Activated CD4-positive, alpha-beta memory T cell treated with anti-CD3 and anti-CD28 coated beads for 36 hours (primary cell): ENCODE measurements at regions of chr13 and their contacts with region 1.

Region 1: GRCh38 chr13:51814825-51815650 is 11.1 kb upstream of the DHRS12 start:
- DNase-seq: peak; percentile 88
- H3K4me3 Mint-ChIP-seq: peak overlapping the region; percentile 48
- H3K27ac Mint-ChIP-seq: peak overlapping the region; percentile 66
- H3K4me1 Mint-ChIP-seq: peaks cover 67% of the 10 kb centered on the region
- H3K27me3 Mint-ChIP-seq: no peaks in the 10 kb centered on the region

Region 2: GRCh38 chr13:51674279-51674678 is 140.8 kb before region 1 on chr13:
- CTCF ChIA-PET with region 1: no interaction called
- POLR2A ChIA-PET with region 1: no interaction called
- intact Hi-C with region 1: no loop called
- DNase-seq: no peak
- H3K4me3 Mint-ChIP-seq: no peak overlapping the region
- H3K27ac Mint-ChIP-seq: no peak overlapping the region
- H3K4me1 Mint-ChIP-seq: peaks cover 4% of the 10 kb centered on the region
- H3K27me3 Mint-ChIP-seq: no peaks in the 10 kb centered on the region

Region 3: DNA sequence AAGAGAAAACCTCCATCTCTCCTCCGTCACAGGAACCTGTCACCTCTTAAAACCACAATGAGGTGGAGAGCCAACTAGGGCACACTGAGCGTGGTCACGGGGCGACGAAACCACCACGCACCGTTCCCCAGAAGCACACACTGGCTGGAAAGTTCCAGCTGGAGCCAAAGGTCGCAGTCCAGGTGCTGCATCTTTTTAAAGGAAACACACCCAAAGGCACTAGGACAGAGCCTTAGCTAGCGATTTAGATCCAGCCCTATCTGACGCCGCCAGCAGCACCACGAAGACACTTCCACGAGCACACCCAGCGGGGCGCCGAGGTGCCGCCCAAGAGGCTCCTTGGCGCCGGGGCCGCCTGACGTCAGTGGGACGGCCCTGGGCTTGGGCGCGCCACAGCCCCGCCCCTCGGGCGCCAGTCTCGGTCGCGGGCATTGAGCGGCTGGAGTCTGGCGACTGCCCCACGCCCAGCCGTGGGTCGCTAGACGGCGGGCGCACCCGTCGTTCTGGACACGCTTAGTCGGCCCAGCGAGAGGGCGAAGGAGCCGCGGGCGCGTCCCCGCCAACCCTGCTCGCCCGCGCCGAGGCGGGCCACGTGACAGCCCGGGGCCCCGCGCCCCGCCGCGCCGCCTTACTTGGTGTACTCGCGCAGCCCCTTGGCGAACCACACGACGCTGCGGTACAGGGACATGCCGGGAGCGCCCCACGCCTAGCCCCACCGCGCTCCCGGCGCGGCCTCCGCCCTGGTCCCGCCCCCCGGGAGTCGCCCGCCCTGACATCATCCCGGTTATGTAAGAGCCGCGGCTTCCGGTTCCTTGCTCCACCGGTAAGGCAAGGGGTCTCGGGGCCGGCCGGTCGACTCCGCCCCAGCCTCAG is 11.4 kb before region 1 on chr13 and contains the start of gene DHRS12:
- CTCF ChIA-PET with region 1: interaction called, 38 read pairs
- POLR2A ChIA-PET with region 1: interaction called, 8 read pairs
- intact Hi-C with region 1: loop called (anchors 1 kb)
- DNase-seq: peak; percentile 89
- H3K4me3 Mint-ChIP-seq: peak within 1 kb of the TSS; percentile 94
- H3K27ac Mint-ChIP-seq: peak within 1 kb of the TSS; percentile 100
- H3K4me1 Mint-ChIP-seq: peaks cover 58% of the 10 kb centered on the region
- H3K27me3 Mint-ChIP-seq: peaks cover 2% of the 10 kb centered on the region
- total RNA-seq, gene DHRS12: 6.7 to 7.0 TPM

Region 4: DNA sequence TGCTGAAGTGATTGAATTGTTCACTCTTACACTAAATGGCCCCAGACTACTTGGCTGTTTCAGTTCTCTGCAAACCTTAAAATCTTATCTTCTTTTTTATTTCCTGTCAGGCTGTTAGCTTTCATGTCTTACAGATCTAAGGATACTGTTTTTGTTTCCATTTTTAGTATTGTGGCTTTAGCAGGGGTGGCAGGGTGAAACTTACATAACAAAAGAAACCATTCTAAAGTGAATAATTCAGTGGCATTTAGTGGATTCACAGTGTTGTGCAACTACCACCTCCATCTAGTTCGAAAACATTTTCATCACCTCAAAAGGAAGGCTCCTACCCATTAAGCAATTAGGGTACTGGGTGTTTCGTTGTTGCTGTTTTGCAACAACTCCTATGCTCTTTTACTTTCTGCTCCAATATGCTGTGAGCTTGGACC is 10.1 kb after region 1 on chr13:
- CTCF ChIA-PET with region 1: interaction called, 119 read pairs
- POLR2A ChIA-PET with region 1: interaction called, 13 read pairs
- intact Hi-C with region 1: loop called (anchors 1 kb)
- DNase-seq: no peak
- H3K4me3 Mint-ChIP-seq: peak overlapping the region; percentile 52
- H3K27ac Mint-ChIP-seq: peak overlapping the region; percentile 84
- H3K4me1 Mint-ChIP-seq: peaks cover 81% of the 10 kb centered on the region
- H3K27me3 Mint-ChIP-seq: no peaks in the 10 kb centered on the region

Region 5: GRCh38 chr13:51832471-51833152 is 17.6 kb after region 1 on chr13:
- CTCF ChIA-PET with region 1: interaction called, 158 read pairs
- POLR2A ChIA-PET with region 1: no interaction called
- intact Hi-C with region 1: loop called (anchors 1 kb)
- DNase-seq: peak; percentile 74
- H3K4me3 Mint-ChIP-seq: peak overlapping the region; percentile 24
- H3K27ac Mint-ChIP-seq: peak overlapping the region; percentile 40
- H3K4me1 Mint-ChIP-seq: peaks cover 29% of the 10 kb centered on the region
- H3K27me3 Mint-ChIP-seq: no peaks in the 10 kb centered on the region

Region 6: GRCh38 chr13:51844862-51845573 is 30.0 kb after region 1 on chr13 and contains the start of gene TMEM272:
- CTCF ChIA-PET with region 1: interaction called, 25 read pairs
- POLR2A ChIA-PET with region 1: no interaction called
- intact Hi-C with region 1: loop called (anchors 1 kb)
- DNase-seq: peak; percentile 74
- H3K4me3 Mint-ChIP-seq: peak within 1 kb of the TSS; percentile 27
- H3K27ac Mint-ChIP-seq: no peak within 1 kb of the TSS
- H3K4me1 Mint-ChIP-seq: peaks cover 16% of the 10 kb centered on the region
- H3K27me3 Mint-ChIP-seq: peaks cover 4% of the 10 kb centered on the region
- total RNA-seq, gene TMEM272: 0.10 to 0.31 TPM

Region 7: GRCh38 chr13:51895906-51896888 is 81.2 kb after region 1 on chr13:
- CTCF ChIA-PET with region 1: interaction called, 22 read pairs
- POLR2A ChIA-PET with region 1: no interaction called
- intact Hi-C with region 1: no loop called
- DNase-seq: peak; percentile 66
- H3K4me3 Mint-ChIP-seq: no peak overlapping the region
- H3K27ac Mint-ChIP-seq: no peak overlapping the region
- H3K4me1 Mint-ChIP-seq: no peaks in the 10 kb centered on the region
- H3K27me3 Mint-ChIP-seq: peaks cover 12% of the 10 kb centered on the region